ENCODE measurements at regions of chr10 and their contacts with region 1.

Region 1: DNA sequence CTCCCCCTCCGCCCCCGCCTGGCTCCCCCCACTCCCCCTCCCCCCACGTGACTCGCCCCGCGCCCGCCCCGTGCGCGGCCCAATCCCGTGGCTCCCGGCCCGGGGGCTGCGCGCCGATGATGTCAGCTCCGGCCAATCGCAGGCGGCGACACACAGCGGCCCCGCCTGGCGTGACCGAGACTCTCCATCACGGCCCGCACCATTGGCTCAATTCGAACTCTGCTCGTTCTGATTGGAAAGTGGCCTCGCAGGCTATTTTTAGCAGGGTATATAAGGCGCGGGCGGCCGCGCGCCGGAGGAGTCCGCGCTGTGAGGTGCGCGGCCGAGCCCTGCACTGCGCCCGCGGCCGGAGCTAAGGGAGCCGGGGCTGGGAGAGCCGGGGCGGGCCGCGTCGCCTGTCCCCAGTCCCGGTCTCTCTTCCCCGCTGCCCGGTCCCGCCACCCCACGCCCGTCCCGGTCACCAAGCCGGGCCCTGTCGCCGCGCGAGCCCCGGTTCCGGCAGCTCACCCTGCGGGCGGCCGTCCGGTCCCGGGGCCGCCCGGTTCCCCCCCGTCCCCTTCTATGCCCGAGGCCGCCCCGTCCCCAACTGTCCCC is 345 bp upstream of the KLF6 start:
- DNase-seq: peak; percentile 99
- ATAC-seq: peak; percentile 76
- H3K4me3 Mint-ChIP-seq: peak overlapping the region; percentile 92
- H3K27ac Mint-ChIP-seq: peak overlapping the region; percentile 99
- H3K4me1 Mint-ChIP-seq: peaks cover 39% of the 10 kb centered on the region
- H3K27me3 Mint-ChIP-seq: no peaks in the 10 kb centered on the region

Region 2: DNA sequence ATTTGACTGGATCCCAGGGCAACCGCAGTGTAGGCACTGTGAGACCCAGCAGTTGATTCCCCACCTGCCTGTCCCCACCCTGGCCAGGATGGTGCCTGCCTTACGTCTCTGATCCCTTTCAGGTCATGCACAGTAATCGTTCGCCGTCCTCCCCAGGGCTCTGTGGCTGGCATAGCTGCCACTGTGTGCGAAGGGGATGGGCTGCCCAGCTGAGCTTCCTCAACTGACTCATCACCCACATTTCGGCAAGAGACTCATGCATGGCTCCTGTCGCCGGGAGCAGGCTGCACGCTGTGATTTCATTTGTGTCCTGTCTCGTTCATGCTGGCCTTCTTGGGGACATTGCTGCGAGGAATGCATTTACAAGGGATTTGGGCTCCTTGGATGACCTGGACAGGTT is 252.7 kb before region 1 on chr10:
- POLR2A ChIA-PET with region 1: no interaction called
- DNase-seq: no peak
- ATAC-seq: no peak
- H3K4me3 Mint-ChIP-seq: no peak overlapping the region
- H3K27ac Mint-ChIP-seq: no peak overlapping the region
- H3K4me1 Mint-ChIP-seq: no peaks in the 10 kb centered on the region
- H3K27me3 Mint-ChIP-seq: peaks cover 6% of the 10 kb centered on the region

Region 3: GRCh38 chr10:3666525-3667302 is 118.6 kb before region 1 on chr10:
- POLR2A ChIA-PET with region 1: interaction called, 11 read pairs
- DNase-seq: peak; percentile 56
- ATAC-seq: peak; percentile 28
- H3K4me3 Mint-ChIP-seq: peak overlapping the region; percentile 70
- H3K27ac Mint-ChIP-seq: peak overlapping the region; percentile 68
- H3K4me1 Mint-ChIP-seq: peaks cover 36% of the 10 kb centered on the region
- H3K27me3 Mint-ChIP-seq: peaks cover 9% of the 10 kb centered on the region

Region 4: DNA sequence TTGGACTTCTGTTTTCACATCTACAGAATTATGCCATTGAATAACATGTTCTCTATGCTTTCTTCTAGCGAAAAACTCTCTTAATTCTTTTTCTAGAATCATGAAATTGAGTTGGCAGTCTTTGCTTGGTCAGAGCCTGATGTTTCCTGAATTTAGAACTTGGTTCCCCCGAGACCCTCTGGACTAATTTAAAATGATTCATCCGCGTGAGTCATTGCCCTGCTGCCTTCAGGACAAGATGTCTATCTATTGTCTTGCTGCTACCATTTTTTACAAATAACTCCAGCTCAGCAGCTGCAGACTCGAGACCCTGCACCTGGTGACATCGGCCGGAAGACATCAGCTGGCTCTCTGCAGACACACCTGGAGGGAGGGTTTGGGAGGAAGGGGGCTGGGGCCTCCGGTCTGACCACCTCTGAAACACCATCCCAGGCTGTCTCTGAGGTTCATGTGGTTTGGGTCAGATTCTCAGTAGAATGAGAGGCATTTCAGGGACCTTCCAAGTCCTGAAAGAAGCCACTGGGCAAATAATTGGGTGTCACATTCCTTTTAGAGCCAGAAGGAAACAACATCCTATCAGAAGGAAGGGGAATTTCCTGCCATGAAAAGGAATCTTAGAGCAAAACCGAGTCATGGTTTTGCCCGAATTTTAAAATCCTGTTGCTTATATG is 20.6 kb after region 1 on chr10:
- POLR2A ChIA-PET with region 1: interaction called, 533 read pairs
- DNase-seq: no peak
- ATAC-seq: no peak
- H3K4me3 Mint-ChIP-seq: peak overlapping the region; percentile 77
- H3K27ac Mint-ChIP-seq: peak overlapping the region; percentile 98
- H3K4me1 Mint-ChIP-seq: peaks cover 57% of the 10 kb centered on the region
- H3K27me3 Mint-ChIP-seq: no peaks in the 10 kb centered on the region

Region 5: DNA sequence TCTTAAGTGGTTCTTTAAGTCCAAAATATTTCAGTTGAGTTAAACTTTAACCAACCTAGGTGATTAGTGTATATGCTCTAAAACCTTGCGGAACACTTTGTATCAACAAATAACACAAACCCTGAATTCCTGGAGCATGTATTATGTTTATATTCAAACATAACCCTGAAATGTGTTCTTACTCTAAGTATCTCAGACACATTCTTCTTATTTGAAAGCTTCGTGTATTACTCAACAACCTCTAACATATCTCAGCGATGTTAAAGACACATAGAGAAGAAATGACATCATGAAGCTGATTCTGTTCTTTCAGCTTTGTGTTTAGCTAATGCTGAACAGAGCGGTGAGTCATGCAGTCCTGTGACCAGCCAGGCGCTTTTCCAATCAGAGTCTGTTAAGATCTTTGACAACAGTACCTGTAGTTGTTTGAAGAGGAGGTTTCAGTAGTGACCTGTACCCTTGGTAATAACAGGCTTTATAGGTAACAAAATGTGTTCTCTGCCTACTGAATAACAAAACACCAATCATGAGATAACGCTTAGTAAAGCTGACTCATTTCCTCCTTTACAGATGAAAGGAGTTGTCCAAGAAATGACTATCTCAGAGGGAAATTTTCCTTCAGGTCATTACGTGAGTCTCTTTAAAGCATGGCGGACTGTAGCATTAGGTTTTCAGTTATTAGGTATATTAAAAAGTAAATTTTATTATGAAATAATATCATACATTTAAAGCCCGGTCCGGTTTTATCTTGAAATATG is 67.0 kb after region 1 on chr10:
- POLR2A ChIA-PET with region 1: interaction called, 35 read pairs
- DNase-seq: no peak
- ATAC-seq: peak; percentile 89
- H3K4me3 Mint-ChIP-seq: no peak overlapping the region
- H3K27ac Mint-ChIP-seq: peak overlapping the region; percentile 55
- H3K4me1 Mint-ChIP-seq: peaks cover 19% of the 10 kb centered on the region
- H3K27me3 Mint-ChIP-seq: no peaks in the 10 kb centered on the region

Region 6: GRCh38 chr10:3935141-3935540 is 149.8 kb after region 1 on chr10:
- POLR2A ChIA-PET with region 1: interaction called, 258 read pairs
- DNase-seq: no peak
- ATAC-seq: peak; percentile 89
- H3K4me3 Mint-ChIP-seq: peak overlapping the region; percentile 76
- H3K27ac Mint-ChIP-seq: peak overlapping the region; percentile 98
- H3K4me1 Mint-ChIP-seq: peaks cover 50% of the 10 kb centered on the region
- H3K27me3 Mint-ChIP-seq: no peaks in the 10 kb centered on the region

Region 7: GRCh38 chr10:3961082-3961481 is 175.7 kb after region 1 on chr10:
- POLR2A ChIA-PET with region 1: interaction called, 242 read pairs
- DNase-seq: peak; percentile 67
- ATAC-seq: peak; percentile 97
- H3K4me3 Mint-ChIP-seq: peak overlapping the region; percentile 85
- H3K27ac Mint-ChIP-seq: peak overlapping the region; percentile 93
- H3K4me1 Mint-ChIP-seq: peaks cover 57% of the 10 kb centered on the region
- H3K27me3 Mint-ChIP-seq: no peaks in the 10 kb centered on the region

Region 8: GRCh38 chr10:4131407-4132228 is 346.3 kb after region 1 on chr10:
- POLR2A ChIA-PET with region 1: interaction called, 74 read pairs
- DNase-seq: peak; percentile 36
- ATAC-seq: peak; percentile 73
- H3K4me3 Mint-ChIP-seq: no peak overlapping the region
- H3K27ac Mint-ChIP-seq: no peak overlapping the region
- H3K4me1 Mint-ChIP-seq: peaks cover 44% of the 10 kb centered on the region
- H3K27me3 Mint-ChIP-seq: no peaks in the 10 kb centered on the region

Measured in activated naive CD8-positive, alpha-beta T cell treated with anti-CD3 and anti-CD28 coated beads, Interleukin-2, amount 10 ng/mL, durations not matched to agents 7 days and 5 days (primary cell).